ENCODE measurements at regions of chr1 and their contacts with region 1.

Region 1: DNA sequence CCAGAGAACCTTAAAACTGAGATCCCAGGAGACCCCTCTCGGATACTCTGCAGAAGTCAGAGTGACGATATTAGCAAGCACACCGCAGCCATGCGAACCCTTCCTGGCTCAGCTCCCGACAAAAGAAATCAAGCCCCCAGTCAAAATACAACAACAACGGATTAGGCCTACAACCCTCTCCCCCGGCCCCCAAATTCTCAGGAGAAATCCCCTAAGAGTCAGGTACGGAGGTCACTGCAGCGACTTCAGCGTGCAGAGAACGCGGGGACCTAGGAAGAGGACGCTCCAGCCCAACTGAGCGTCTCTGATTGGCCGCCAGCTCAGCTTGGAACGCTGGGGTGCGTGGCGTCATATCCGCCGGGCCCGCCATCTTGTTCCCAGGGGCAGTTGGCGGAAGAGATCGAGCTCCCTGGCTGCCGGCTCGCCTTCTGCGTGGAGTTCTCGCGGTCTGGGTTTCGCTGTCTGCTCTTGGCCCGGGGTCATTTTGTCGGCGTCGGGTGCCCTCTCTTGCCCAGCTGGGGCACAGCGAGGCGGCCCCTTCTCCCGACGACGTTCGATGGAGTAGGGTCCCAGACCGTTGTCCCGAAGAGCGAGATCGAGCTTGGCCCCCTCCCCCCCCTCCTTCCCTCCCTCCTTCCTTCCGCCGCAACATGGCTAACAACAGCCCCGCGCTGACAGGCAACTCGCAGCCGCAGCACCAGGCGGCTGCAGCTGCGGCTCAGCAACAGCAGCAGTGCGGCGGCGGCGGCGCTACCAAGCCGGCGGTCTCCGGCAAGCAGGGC is at the start of gene PRPF38B:
- DNase-seq: peak; percentile 96
- ATAC-seq: peak; percentile 89
- H3K4me3 Mint-ChIP-seq: peak within 1 kb of the TSS; percentile 97
- H3K27ac Mint-ChIP-seq: peak within 1 kb of the TSS; percentile 97
- H3K4me1 Mint-ChIP-seq: peaks cover 31% of the 10 kb centered on the region
- H3K27me3 Mint-ChIP-seq: no peaks in the 10 kb centered on the region
- CTCF ChIP-seq: no peak
- total RNA-seq, gene PRPF38B: 62.5 to 65.3 TPM

Region 2: DNA sequence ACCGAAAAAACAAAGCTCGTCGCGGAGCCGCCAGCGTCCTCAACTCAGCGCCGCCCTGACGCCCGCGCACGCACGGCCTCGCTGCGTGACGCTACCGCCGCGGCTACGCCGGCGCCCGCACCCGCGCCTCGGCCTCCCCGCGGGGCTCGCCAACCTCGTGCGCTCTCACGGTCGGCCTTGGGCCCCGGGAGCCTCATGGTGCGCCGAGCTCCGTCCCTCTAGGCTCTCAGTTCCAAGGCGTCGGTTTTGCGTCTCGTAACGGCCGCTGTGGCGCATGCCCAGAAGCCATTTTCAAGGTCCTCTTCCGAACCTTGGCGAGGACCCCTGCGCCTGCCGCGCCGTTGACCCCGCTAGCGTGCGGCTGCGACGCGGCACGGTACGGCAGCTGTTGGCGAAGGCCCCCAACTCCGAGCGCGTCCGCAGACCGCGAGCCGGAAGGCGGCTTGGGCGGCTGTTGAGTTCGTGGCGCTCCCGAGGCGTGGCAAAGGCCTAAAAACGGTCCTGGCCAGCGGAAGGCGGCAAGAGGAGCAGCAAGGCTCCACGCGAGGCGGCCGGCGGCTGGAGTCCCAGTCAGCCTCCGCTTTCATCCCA is 31.0 kb before region 1 on chr1 and contains the start of gene HENMT1:
- CTCF ChIA-PET with region 1: interaction called, 13 read pairs
- POLR2A ChIA-PET with region 1: interaction called, 64 read pairs
- intact Hi-C with region 1: no loop called
- DNase-seq: peak; percentile 83
- ATAC-seq: peak; percentile 80
- H3K4me3 Mint-ChIP-seq: peak within 1 kb of the TSS; percentile 82
- H3K27ac Mint-ChIP-seq: peak within 1 kb of the TSS; percentile 96
- H3K4me1 Mint-ChIP-seq: peaks cover 40% of the 10 kb centered on the region
- H3K27me3 Mint-ChIP-seq: no peaks in the 10 kb centered on the region
- CTCF ChIP-seq: no peak
- total RNA-seq, gene HENMT1: 25.3 to 27.1 TPM

Region 3: DNA sequence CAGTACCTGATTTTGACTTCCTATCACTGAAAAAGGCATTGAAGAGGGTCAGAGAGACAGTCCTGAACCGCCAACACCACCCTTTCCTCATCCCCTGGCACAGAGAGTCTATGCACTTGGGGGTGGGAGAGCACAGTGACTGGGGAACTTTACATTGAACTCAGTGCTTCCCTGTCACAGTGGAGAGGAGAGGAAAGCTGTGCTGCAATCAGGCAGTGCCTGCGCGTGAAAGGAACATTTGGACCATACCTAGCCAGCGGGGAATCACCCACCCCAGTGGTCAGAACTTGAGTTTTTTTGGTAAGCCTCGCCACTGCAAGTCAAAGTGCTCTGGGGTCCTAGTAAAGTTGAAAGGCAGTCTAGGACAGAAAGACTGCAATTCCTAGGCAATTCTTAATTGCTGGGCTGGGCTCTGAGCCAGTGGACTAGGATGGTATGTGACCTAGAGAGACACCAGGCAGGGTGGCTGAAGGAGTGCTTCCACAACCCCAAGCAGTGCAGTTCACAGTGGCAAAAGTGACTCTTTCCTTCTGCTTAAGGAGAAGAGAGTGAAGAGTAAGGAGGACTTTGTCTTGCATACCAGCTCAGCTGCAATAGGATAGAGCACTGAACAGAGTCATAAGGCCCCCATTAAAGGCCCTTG is 21.9 kb before region 1 on chr1:
- CTCF ChIA-PET with region 1: no interaction called
- POLR2A ChIA-PET with region 1: interaction called, 14 read pairs
- intact Hi-C with region 1: no loop called
- DNase-seq: no peak
- ATAC-seq: peak; percentile 28
- H3K4me3 Mint-ChIP-seq: no peak overlapping the region
- H3K27ac Mint-ChIP-seq: peak overlapping the region; percentile 29
- H3K4me1 Mint-ChIP-seq: peaks cover 19% of the 10 kb centered on the region
- H3K27me3 Mint-ChIP-seq: no peaks in the 10 kb centered on the region
- CTCF ChIP-seq: no peak

Region 4: GRCh38 chr1:108678706-108679105 is 13.4 kb before region 1 on chr1:
- CTCF ChIA-PET with region 1: interaction called, 7 read pairs
- POLR2A ChIA-PET with region 1: interaction called, 20 read pairs
- intact Hi-C with region 1: no loop called
- DNase-seq: no peak
- ATAC-seq: no peak
- H3K4me3 Mint-ChIP-seq: no peak overlapping the region
- H3K27ac Mint-ChIP-seq: no peak overlapping the region
- H3K4me1 Mint-ChIP-seq: peaks cover 11% of the 10 kb centered on the region
- H3K27me3 Mint-ChIP-seq: no peaks in the 10 kb centered on the region
- CTCF ChIP-seq: no peak

Region 5: DNA sequence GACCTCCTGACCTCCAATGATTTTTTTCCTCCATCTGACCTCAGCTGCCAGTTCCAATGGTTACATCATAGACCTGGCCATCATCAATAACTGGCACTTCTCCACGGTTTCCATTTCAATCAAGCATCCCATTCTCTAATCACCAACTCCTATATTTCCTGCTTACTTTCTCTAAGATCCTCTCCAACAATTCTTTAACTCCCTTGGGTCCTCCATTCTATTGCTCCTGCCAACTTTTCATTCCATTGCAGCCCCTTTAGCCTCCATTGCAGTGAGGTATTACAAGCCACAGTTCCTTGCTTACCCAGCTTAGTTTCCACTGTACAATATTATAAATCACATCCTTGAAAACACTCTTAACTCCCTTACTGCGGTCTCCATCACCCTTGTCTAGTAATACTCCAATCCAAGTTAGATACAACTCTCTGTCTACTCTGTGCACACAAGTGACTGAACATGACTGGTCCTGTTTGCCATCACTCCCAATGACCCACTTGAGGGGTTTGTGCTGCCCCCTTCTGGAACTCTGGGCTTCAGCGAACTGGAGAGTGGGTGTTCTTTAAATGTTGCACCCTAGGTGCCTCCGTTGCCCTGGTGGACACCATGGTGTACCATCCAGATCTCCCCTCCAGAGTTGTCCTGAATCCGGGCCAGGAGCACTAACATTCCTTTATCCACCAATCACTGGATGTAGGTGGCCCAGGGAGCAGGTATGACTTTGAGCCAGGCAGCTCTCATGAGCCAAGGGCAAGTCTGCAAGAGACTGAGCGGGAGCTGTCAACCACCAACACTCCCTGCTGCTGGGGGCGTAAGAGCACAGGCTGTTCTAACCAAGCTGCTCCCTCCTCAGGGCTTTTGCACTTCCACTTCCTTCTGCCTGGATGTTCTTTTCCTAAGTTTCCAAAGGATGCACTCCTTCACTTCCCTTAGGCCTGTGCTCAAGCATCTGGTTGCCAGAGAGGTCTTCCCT is 16.8 kb after region 1 on chr1:
- CTCF ChIA-PET with region 1: interaction called, 21 read pairs
- POLR2A ChIA-PET with region 1: interaction called, 32 read pairs
- intact Hi-C with region 1: no loop called
- DNase-seq: peak; percentile 85
- ATAC-seq: peak; percentile 85
- H3K4me3 Mint-ChIP-seq: no peak overlapping the region
- H3K27ac Mint-ChIP-seq: no peak overlapping the region
- H3K4me1 Mint-ChIP-seq: peaks cover 20% of the 10 kb centered on the region
- H3K27me3 Mint-ChIP-seq: peaks cover 2% of the 10 kb centered on the region
- CTCF ChIP-seq: peak; percentile 68

Region 6: DNA sequence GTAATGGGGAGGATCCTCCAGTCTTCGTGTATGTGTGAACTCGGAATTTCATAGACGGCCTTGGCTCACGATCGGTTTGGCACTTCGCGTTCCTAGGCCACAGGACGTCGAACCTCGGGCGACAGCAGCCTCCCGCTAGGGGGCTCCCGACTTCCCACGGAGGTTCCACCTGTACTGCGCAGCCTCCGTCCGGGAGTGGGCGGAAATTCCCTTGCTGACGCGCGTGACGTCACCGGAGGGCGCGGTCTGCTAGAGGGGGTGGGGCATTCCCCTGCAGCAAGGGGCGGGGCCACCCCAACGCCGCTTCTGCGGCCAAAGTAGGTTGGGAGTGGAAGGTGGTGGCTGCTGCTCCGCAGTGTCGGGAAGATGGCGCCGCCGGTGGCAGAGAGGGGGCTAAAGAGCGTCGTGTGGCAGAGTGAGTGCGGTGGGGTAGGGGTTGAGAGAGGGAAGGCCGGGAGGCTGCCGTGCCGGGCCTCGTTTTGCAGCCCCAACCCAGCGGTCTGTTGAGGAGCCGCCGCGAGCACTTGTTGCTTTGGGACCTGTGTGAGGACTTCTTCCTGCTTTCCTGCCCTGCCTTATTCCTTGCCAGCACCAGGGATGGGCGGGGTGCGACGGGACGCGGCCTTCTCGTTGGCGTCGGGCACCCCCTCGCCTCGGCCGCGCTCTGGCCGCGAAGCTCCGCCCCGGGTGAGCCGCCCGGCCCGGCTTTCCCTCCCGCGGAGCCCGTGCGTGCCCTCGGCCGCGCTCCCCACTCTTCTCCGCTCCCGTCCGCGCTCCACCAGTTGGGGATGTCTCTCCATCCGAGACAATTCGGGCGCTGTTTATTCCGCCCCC is 54.5 kb after region 1 on chr1 and contains the start of gene STXBP3:
- CTCF ChIA-PET with region 1: no interaction called
- POLR2A ChIA-PET with region 1: interaction called, 8 read pairs
- intact Hi-C with region 1: loop called (anchors 2 kb)
- DNase-seq: peak; percentile 99
- ATAC-seq: peak; percentile 95
- H3K4me3 Mint-ChIP-seq: peak within 1 kb of the TSS; percentile 94
- H3K27ac Mint-ChIP-seq: peak within 1 kb of the TSS; percentile 95
- H3K4me1 Mint-ChIP-seq: peaks cover 28% of the 10 kb centered on the region
- H3K27me3 Mint-ChIP-seq: no peaks in the 10 kb centered on the region
- CTCF ChIP-seq: peak; percentile 90
- total RNA-seq, gene STXBP3: 34.4 to 38.3 TPM